CD8-positive, alpha-beta memory T cell (primary cell): ENCODE measurements at regions of chr20 and their contacts with region 1.

Region 1: GRCh38 chr20:56358596-56359211 is at the start of gene FAM210B:
- DNase-seq: peak; percentile 75 to 87 (median 79)
- H3K4me3 ChIP-seq: peak within 1 kb of the TSS; percentile 77
- H3K4me3 Mint-ChIP-seq: peak within 1 kb of the TSS; percentile 86 to 91 (median 88)
- H3K27ac ChIP-seq: peak within 1 kb of the TSS; percentile 72
- H3K27ac Mint-ChIP-seq: peak within 1 kb of the TSS in 7 of 8 donors; percentile 60 to 90 (median 80)
- H3K4me1 ChIP-seq: peaks cover 14% of the 10 kb centered on the region
- H3K4me1 Mint-ChIP-seq: peaks cover 18 to 30% (median 23%) of the 10 kb centered on the region in 3 donors
- H3K27me3 ChIP-seq: no peaks in the 10 kb centered on the region
- H3K27me3 Mint-ChIP-seq: peaks cover 0 to 2% of the 10 kb centered on the region in 2 donors
- total RNA-seq, gene FAM210B: 6.3 to 6.7 TPM

Region 2: DNA sequence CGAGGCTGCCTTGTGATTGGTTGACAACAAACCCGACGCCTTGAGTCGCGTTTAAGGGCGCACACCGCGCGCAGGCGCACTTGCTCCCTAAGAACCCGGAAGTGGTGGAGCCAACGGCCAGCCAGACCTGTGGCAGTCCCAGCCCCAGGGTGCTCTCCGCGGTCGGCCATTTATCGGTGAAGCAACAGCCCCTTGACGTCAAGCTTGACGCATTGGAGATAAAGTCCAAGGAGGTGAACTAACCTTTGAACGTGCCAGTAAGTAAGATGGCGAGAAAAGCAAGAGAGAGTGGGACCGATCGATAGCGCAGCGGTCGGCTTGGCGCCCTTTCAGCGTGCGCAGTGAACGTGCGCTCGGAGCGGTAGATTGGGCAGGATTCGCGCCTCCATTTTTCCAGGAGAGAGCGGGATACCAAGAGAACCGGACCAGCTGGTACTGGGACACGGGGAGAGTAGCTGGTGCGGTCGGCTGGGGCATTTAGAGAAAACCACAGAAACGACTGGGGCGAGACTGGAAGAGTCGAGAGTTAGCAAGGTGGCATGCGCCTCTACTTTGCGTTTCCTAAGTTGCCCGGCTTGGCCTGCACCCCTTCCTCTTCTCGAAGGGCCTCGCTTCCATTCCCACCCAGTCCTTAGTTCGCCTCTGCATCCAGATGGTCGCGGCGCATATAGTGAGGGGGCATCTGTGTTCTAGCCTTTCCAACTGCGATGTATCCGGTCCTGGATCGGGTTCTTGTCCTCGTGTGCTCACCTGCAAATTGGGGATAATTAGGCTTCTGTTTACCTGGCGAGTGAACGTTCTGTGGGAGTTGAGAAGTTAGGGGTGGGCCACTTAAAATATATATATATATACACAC is 33.8 kb after region 1 on chr20 and contains the start of gene CSTF1:
- CTCF ChIA-PET with region 1: interaction called, 3 read pairs
- POLR2A ChIA-PET with region 1: interaction called, 14 read pairs
- DNase-seq: peak; percentile 98 to 100 (median 99)
- H3K4me3 ChIP-seq: peak within 1 kb of the TSS; percentile 98
- H3K4me3 Mint-ChIP-seq: no peak within 1 kb of the TSS
- H3K27ac ChIP-seq: peak within 1 kb of the TSS; percentile 94
- H3K27ac Mint-ChIP-seq: no peak within 1 kb of the TSS
- H3K4me1 ChIP-seq: peaks cover 21% of the 10 kb centered on the region
- H3K4me1 Mint-ChIP-seq: peaks cover 28 to 35% (median 31%) of the 10 kb centered on the region in 3 donors
- H3K27me3 ChIP-seq: no peaks in the 10 kb centered on the region
- H3K27me3 Mint-ChIP-seq: peaks cover 0 to 2% of the 10 kb centered on the region in 2 donors
- total RNA-seq, gene CSTF1: 54.2 to 54.7 TPM

Region 3: GRCh38 chr20:56411759-56412472 is 53.2 kb after region 1 on chr20 and contains the start of gene CASS4:
- CTCF ChIA-PET with region 1: no interaction called
- POLR2A ChIA-PET with region 1: no interaction called
- DNase-seq: peak in 3 of 5 donors; percentile 54 to 78 (median 63)
- H3K4me3 ChIP-seq: peak within 1 kb of the TSS; percentile 83
- H3K4me3 Mint-ChIP-seq: peak within 1 kb of the TSS; percentile 90 to 96 (median 93)
- H3K27ac ChIP-seq: peak within 1 kb of the TSS; percentile 69
- H3K27ac Mint-ChIP-seq: peak within 1 kb of the TSS; percentile 91 to 99 (median 98)
- H3K4me1 ChIP-seq: peaks cover 56% of the 10 kb centered on the region
- H3K4me1 Mint-ChIP-seq: peaks cover 45 to 57% (median 51%) of the 10 kb centered on the region in 3 donors
- H3K27me3 ChIP-seq: no peaks in the 10 kb centered on the region
- H3K27me3 Mint-ChIP-seq: no peaks in the 10 kb centered on the region
- total RNA-seq, gene CASS4: 3.7 TPM

Region 4: GRCh38 chr20:56885521-56885920 is 526.8 kb after region 1 on chr20:
- CTCF ChIA-PET with region 1: no interaction called
- POLR2A ChIA-PET with region 1: no interaction called
- DNase-seq: no peak
- H3K4me3 ChIP-seq: no peak overlapping the region
- H3K4me3 Mint-ChIP-seq: no peak overlapping the region
- H3K27ac ChIP-seq: no peak overlapping the region
- H3K27ac Mint-ChIP-seq: no peak overlapping the region
- H3K4me1 ChIP-seq: no peaks in the 10 kb centered on the region
- H3K4me1 Mint-ChIP-seq: no peaks in the 10 kb centered on the region
- H3K27me3 ChIP-seq: no peaks in the 10 kb centered on the region
- H3K27me3 Mint-ChIP-seq: peaks cover 9 to 10% of the 10 kb centered on the region in 2 donors